ENCODE measurements at regions of chr10 and their contacts with region 1.

Region 1: DNA sequence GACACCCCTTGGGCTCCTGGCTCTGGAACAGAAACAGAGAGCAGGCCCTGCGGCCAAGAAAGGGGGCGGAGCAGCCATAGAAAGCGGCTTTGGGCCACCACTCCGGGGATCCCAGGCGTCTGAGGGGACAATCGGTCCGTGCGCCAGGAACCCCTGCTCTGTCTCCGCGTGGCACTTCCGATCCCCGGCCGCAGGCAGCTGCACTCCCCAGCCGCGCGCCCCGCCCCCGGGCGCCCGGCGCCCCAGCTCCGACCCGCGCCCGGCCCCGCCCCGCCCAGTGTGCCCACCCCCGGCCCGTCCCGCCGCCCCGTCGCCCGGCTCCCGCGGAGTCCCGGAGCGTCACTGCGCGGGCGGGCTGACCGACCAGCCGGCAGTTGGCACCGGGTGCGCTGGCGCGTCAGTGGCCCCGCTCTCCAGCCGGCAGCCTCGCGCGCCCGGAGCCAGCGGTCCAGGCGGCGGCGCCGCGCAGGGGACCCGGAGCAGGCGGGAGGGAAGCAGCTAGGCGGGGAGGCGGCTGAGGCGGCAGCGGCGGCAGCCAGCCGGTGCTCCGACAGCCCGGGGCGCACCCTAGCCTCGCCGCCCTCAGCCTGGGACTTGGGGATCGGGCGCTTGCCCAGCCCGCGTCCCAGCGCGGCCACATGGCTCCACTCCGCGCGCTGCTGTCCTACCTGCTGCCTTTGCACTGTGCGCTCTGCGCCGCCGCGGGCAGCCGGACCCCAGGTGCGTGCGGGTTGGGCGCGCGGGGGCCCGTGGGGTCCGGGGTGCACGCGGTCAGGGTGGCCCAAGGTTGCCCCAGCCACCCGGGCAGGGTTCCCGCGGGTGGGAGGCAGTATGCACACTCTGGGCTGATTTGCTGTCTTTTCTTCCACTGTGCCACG is at the start of gene ADAMTS14:
- DNase-seq: no peak
- H3K4me3 Mint-ChIP-seq: peak within 1 kb of the TSS; percentile 61
- H3K27ac Mint-ChIP-seq: no peak within 1 kb of the TSS
- H3K4me1 Mint-ChIP-seq: peaks cover 30% of the 10 kb centered on the region
- H3K27me3 Mint-ChIP-seq: peaks cover 36% of the 10 kb centered on the region
- CTCF ChIP-seq: no peak
- total RNA-seq, gene ADAMTS14: 0.25 TPM in 1 of 2 replicates, not detected in the other

Region 2: DNA sequence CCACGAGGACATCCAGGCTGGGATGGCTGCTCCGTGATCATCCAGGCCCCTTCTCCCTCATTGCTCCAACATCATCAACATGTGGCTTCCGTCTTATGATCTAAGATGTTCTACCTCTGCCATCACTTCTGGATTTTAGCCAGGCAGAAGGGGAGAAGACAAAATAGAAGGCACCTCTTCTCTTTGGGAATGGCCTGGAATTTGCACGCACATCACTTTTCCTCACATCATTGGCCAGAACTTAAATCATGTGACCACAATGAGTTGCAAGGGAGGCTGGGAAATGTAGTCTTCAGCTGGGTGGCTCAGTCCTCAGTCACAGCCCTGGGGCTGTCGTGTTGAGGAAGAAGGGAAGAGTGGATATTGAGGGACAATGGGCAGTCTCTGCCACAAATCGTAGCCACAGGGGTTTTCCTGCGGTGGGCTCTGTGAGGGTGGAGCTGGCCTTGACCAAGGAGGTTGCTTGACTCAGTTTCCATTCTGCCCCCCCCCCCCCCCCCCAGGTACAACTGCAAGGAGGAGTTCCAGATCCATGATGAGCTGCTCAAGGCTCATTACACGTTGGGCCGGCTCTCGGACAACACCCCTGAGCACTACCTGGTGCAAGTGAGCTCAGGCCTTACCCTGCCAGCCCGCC is 143.6 kb before region 1 on chr10:
- CTCF ChIA-PET with region 1: no interaction called
- POLR2A ChIA-PET with region 1: no interaction called
- intact Hi-C with region 1: no loop called
- DNase-seq: peak; percentile 66
- H3K4me3 Mint-ChIP-seq: no peak overlapping the region
- H3K27ac Mint-ChIP-seq: no peak overlapping the region
- H3K4me1 Mint-ChIP-seq: no peaks in the 10 kb centered on the region
- H3K27me3 Mint-ChIP-seq: no peaks in the 10 kb centered on the region
- CTCF ChIP-seq: no peak

Region 3: GRCh38 chr10:70558871-70559810 is 113.3 kb before region 1 on chr10:
- CTCF ChIA-PET with region 1: interaction called, 6 read pairs
- POLR2A ChIA-PET with region 1: no interaction called
- intact Hi-C with region 1: loop called (anchors 2 kb)
- DNase-seq: peak; percentile 66
- H3K4me3 Mint-ChIP-seq: no peak overlapping the region
- H3K27ac Mint-ChIP-seq: no peak overlapping the region
- H3K4me1 Mint-ChIP-seq: peaks cover 9% of the 10 kb centered on the region
- H3K27me3 Mint-ChIP-seq: peaks cover 15% of the 10 kb centered on the region
- CTCF ChIP-seq: peak; percentile 69

Region 4: DNA sequence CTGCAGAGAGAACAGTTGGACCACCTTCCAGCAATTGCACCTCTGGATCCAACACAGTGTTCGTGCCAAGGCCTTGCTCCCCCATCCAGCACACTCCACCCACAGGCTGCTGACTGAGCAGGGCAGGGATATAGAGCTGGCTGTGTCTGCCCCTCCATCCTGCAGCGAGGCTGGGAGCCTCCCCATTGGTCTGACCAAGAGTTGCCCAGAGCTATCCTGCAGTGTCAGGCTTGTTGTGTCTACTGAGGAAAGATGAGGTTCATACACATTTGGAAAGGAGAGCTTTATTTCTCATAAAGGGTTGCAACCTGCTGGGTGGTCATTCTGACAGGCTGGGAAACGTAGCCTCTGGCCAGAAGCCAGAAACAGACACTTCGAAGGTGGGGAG is 96.9 kb before region 1 on chr10:
- CTCF ChIA-PET with region 1: no interaction called
- POLR2A ChIA-PET with region 1: no interaction called
- intact Hi-C with region 1: no loop called
- DNase-seq: no peak
- H3K4me3 Mint-ChIP-seq: no peak overlapping the region
- H3K27ac Mint-ChIP-seq: no peak overlapping the region
- H3K4me1 Mint-ChIP-seq: peaks cover 36% of the 10 kb centered on the region
- H3K27me3 Mint-ChIP-seq: no peaks in the 10 kb centered on the region
- CTCF ChIP-seq: no peak

Region 5: GRCh38 chr10:70619271-70620019 is 53.0 kb before region 1 on chr10:
- CTCF ChIA-PET with region 1: interaction called, 3 read pairs
- POLR2A ChIA-PET with region 1: interaction called, 3 read pairs
- intact Hi-C with region 1: loop called (anchors 5 kb)
- DNase-seq: peak; percentile 54
- H3K4me3 Mint-ChIP-seq: no peak overlapping the region
- H3K27ac Mint-ChIP-seq: no peak overlapping the region
- H3K4me1 Mint-ChIP-seq: peaks cover 10% of the 10 kb centered on the region
- H3K27me3 Mint-ChIP-seq: no peaks in the 10 kb centered on the region
- CTCF ChIP-seq: peak; percentile 48

Region 6: DNA sequence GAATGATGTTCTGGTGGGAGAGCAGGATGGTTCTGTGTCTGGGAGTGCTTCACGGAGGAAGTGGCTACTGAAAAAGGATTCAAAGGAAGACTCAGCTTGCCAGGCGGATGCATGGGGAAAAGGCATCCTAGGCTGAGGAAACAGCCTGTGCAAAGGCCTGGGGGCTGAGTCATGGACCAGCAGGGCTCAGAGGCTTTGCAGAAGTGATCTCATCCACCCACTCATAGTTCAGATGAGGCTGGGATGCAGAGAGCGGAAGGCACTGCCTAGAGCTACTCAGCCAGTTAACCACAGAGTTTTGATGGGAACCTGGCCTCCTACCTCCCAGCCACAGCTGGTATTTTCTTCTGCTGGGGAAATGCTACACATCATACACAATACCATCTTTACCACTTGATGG is 15.9 kb before region 1 on chr10:
- CTCF ChIA-PET with region 1: no interaction called
- POLR2A ChIA-PET with region 1: interaction called, 4 read pairs
- intact Hi-C with region 1: loop called (anchors 1 kb)
- DNase-seq: peak; percentile 92
- H3K4me3 Mint-ChIP-seq: no peak overlapping the region
- H3K27ac Mint-ChIP-seq: no peak overlapping the region
- H3K4me1 Mint-ChIP-seq: peaks cover 25% of the 10 kb centered on the region
- H3K27me3 Mint-ChIP-seq: no peaks in the 10 kb centered on the region
- CTCF ChIP-seq: no peak

Region 7: DNA sequence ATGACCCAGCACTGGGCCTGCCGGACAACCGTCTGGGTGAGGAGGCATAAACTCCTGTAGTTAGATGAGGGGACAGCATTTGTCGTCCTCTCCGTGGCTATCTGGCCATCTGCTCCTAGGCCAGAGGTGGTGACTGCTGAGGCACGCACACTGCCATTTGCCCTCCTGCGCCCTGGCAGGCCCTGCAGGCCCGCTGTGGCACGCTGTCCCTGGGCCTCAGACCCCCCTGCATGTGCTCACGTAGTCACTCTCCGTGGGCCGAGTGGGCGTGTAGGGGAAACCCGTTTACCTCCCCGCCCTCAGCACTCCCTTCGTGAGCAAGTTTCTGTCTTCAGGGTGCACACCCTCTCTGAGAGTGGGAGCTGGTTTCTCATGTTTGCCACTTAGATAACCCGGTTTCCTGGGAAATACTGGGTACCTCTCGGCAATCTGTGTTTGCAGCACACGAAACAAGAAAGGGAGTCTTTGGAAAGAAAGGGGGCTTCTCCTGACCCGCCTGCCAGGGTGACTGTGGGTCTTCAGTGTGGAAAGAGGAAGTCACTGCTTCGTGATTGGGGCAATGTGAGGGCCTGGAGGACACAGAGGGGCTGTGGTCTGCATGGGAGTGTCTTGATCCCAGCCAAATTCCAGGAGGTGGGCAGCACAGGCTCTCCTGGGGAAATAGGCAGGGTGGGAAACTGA is 10.7 kb after region 1 on chr10:
- CTCF ChIA-PET with region 1: no interaction called
- POLR2A ChIA-PET with region 1: no interaction called
- intact Hi-C with region 1: no loop called
- DNase-seq: no peak
- H3K4me3 Mint-ChIP-seq: no peak overlapping the region
- H3K27ac Mint-ChIP-seq: no peak overlapping the region
- H3K4me1 Mint-ChIP-seq: no peaks in the 10 kb centered on the region
- H3K27me3 Mint-ChIP-seq: no peaks in the 10 kb centered on the region
- CTCF ChIP-seq: no peak

Region 8: GRCh38 chr10:70722820-70723424 is 50.5 kb after region 1 on chr10:
- CTCF ChIA-PET with region 1: no interaction called
- POLR2A ChIA-PET with region 1: no interaction called
- intact Hi-C with region 1: loop called (anchors 10 kb)
- DNase-seq: peak; percentile 36
- H3K4me3 Mint-ChIP-seq: no peak overlapping the region
- H3K27ac Mint-ChIP-seq: no peak overlapping the region
- H3K4me1 Mint-ChIP-seq: peaks cover 6% of the 10 kb centered on the region
- H3K27me3 Mint-ChIP-seq: no peaks in the 10 kb centered on the region
- CTCF ChIP-seq: no peak